AG04450 (cell line): ENCODE measurements at regions of chr2 and their contacts with region 1.

Region 1: DNA sequence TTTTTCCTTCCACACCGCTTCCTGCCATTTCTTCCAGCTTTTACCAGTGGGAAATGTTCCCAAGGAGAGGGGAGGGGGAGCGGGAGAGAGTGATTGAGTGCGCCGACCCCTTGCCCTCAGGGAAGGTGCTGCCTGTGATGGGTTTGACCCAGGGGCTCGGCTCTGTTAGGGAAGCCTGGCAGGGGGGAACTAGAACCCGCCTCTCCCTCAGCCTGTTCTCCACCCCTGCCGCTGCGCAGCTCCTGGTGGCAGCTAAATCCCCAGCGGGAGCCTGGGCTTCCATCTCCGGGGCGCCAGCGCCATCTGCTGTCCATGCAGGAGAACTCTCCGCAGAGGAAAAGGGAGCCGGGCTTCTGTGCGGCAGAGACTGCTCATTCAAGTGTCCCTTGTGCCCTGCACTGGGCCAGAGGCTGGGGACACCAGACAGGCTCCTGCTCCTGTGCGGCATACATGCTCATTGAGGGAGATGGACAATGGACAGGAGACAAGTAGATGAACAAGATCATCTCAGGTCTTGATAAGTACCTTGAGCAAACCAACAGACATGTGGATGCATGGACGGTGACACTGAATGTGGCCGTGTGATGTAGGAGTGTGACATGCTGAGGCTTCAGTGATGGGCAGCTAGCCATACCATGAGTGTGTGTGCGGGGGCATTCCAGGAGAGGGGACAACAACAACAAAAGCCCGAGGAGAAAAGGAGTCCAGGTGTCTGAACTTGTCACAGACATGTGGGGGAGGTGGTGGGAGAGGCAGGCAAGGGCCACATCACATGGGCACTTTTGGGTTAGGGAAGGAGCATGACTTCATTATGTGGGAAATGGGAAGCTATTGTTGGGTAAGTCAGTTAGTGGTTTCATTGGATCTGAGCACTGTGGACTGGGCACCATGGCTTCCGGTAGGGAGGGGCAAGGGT is 13.3 kb downstream of the CHPF start:
- DNase-seq: peak; percentile 59
- H3K4me3 ChIP-seq: peak overlapping the region; percentile 41
- H3K27ac ChIP-seq: no peak overlapping the region
- H3K27me3 ChIP-seq: peaks cover 45% of the 10 kb centered on the region
- CTCF ChIP-seq: peak; percentile 98

Region 2: GRCh38 chr2:219368690-219369195 is 161.6 kb before region 1 on chr2:
- CTCF ChIA-PET with region 1: interaction called, 11 read pairs
- POLR2A ChIA-PET with region 1: no interaction called
- DNase-seq: peak; percentile 62
- H3K4me3 ChIP-seq: peak overlapping the region; percentile 31; the same call in 1 of the 2 replicates
- H3K27ac ChIP-seq: peak overlapping the region; percentile 81
- H3K27me3 ChIP-seq: no peaks in the 10 kb centered on the region
- CTCF ChIP-seq: no peak

Region 3: GRCh38 chr2:219388127-219388844 is 142.0 kb before region 1 on chr2:
- CTCF ChIA-PET with region 1: interaction called, 61 read pairs
- POLR2A ChIA-PET with region 1: no interaction called
- DNase-seq: peak; percentile 96
- H3K4me3 ChIP-seq: peak overlapping the region; percentile 49
- H3K27ac ChIP-seq: no peak overlapping the region
- H3K27me3 ChIP-seq: peaks cover 8% of the 10 kb centered on the region
- CTCF ChIP-seq: peak; percentile 46

Region 4: DNA sequence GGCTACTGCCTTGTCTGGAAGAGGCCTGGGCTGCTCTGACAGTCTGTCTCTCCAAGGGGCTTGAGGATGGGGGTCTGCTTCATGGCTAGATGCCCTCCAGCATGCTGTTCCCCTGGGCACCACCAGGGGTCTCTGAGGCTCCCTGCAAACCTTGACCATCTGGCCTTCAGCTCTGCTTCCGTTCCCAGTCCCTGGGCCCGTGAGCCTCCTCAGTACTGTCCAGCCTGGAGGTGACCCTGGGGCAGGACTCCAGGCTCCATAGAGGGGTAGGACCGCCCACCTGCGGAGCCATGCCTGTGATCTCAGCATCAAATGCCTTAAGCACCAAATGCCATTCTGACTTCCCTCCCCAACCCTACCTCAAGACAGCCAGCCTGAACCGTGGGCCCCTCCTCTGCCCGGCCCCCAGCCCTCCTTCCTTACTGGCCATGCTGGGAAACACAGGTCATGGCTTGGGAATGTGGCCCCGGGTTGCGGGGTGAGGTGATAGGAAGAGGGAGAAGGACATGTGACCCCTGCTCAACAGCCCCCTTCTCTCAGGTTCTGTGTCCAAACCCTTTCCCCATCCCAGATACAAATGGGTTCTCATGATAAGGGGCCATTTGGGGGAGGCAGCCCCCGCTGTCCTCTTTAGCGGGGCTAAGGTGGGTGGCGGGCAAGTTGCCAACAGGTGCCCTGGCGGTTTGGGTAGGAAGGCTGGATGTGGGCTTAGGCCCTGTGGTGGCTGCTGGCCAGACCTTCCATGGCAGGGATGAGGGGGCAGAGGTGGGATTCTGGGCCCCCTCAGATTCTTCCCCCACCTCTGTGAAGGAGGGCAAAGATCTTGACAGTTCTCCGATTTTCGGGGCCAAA is 70.6 kb before region 1 on chr2:
- CTCF ChIA-PET with region 1: interaction called, 26 read pairs
- POLR2A ChIA-PET with region 1: no interaction called
- DNase-seq: no peak
- H3K4me3 ChIP-seq: no peak overlapping the region
- H3K27ac ChIP-seq: peak overlapping the region; percentile 70
- H3K27me3 ChIP-seq: no peaks in the 10 kb centered on the region
- CTCF ChIP-seq: peak; percentile 95

Region 5: DNA sequence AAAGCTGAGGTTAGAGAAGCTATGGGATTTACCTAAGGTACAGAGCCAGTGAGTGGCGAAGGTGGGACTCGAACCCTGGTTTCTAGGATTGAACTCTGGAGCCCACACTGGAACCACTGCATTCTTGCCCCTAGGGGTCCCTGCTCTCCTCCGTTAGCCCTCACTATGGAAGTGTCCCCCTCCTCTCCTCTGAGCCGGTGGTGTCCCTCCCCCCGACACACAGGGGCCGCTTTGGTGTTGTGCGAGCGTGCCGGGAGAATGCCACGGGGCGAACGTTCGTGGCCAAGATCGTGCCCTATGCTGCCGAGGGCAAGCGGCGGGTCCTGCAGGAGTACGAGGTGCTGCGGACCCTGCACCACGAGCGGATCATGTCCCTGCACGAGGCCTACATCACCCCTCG is 40.1 kb before region 1 on chr2:
- CTCF ChIA-PET with region 1: interaction called, 168 read pairs
- POLR2A ChIA-PET with region 1: interaction called, 4 read pairs
- DNase-seq: no peak
- H3K4me3 ChIP-seq: no peak overlapping the region
- H3K27ac ChIP-seq: no peak overlapping the region
- H3K27me3 ChIP-seq: no peaks in the 10 kb centered on the region
- CTCF ChIP-seq: no peak; the same call in 1 of the 2 replicates

Region 6: GRCh38 chr2:219509780-219510511 is 20.4 kb before region 1 on chr2:
- CTCF ChIA-PET with region 1: interaction called, 97 read pairs
- POLR2A ChIA-PET with region 1: interaction called, 7 read pairs
- DNase-seq: no peak
- H3K4me3 ChIP-seq: peak overlapping the region; percentile 37
- H3K27ac ChIP-seq: no peak overlapping the region
- H3K27me3 ChIP-seq: peaks cover 46% of the 10 kb centered on the region
- CTCF ChIP-seq: peak; percentile 79

Region 7: GRCh38 chr2:219543601-219544358 is 13.5 kb after region 1 on chr2 and contains the starts of genes CHPF and TMEM198:
- CTCF ChIA-PET with region 1: interaction called, 43 read pairs
- POLR2A ChIA-PET with region 1: no interaction called
- DNase-seq: peak; percentile 95
- H3K4me3 ChIP-seq: peak within 1 kb of the TSS; percentile 75
- H3K27ac ChIP-seq: peak within 1 kb of the TSS; percentile 78
- H3K27me3 ChIP-seq: no peaks in the 10 kb centered on the region
- CTCF ChIP-seq: no peak
- polyA plus RNA-seq, gene CHPF: 24.4 and 37.2 TPM in 2 replicates
- polyA plus RNA-seq, gene TMEM198: 0.83 and 1.2 TPM in 2 replicates